CD8-positive, alpha-beta T cell (primary cell): ENCODE measurements at regions of chr16 and their contacts with region 1.

Region 1: DNA sequence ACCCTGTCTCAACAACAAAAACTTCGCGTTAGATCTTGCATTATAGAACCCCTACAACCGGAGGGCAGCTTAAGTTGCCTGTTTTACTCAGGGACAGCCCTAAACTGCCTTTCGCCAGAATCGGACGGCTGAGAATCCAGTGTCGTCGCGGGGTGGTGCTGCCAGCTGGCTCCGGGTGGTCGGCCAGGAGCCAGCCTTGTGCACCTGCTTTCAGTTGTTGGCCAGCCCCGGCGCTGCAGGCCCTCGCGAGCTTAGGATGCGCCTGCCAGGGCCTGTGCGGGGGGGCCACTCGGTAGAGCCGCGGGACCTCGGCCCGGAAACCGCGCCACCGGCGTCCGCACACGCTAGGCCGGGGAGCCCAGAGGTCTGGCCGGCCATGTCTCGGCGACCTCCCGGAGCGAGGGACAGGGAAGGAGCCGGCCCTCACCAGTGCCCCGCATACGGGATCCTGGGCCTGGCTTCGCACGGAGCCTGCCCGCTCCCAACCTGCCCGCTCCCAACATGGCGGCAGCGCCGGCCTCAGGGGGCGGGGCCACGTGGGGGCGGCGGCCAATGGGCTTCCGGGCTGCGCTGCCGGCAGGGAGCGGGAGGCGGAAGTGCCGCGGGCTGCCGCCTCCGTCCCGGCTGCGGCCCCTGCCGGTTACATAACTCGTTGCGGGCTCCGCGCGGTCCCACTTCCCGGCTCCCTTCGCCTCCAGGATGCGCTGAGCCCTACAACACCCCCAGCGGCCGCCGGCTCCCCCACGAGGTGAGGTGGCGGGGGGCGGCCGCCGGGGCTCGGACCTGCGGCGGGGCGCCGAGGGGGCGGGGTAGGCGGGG is 14.2 kb downstream of the NAA60 start:
- DNase-seq: peak; percentile 78 to 96 (median 90)
- ATAC-seq: peak; percentile 84
- H3K4me3 ChIP-seq: peak overlapping the region; percentile 71 to 72
- H3K4me3 Mint-ChIP-seq: peak overlapping the region; percentile 85
- H3K27ac ChIP-seq: peak overlapping the region; percentile 76 to 89
- H3K27ac Mint-ChIP-seq: peak overlapping the region; percentile 93
- H3K4me1 ChIP-seq: peaks cover 42% of the 10 kb centered on the region
- H3K4me1 Mint-ChIP-seq: peaks cover 52% of the 10 kb centered on the region
- H3K27me3 ChIP-seq: no peaks in the 10 kb centered on the region
- H3K27me3 Mint-ChIP-seq: no peaks in the 10 kb centered on the region
- CTCF ChIP-seq: peak; percentile 49

Region 2: DNA sequence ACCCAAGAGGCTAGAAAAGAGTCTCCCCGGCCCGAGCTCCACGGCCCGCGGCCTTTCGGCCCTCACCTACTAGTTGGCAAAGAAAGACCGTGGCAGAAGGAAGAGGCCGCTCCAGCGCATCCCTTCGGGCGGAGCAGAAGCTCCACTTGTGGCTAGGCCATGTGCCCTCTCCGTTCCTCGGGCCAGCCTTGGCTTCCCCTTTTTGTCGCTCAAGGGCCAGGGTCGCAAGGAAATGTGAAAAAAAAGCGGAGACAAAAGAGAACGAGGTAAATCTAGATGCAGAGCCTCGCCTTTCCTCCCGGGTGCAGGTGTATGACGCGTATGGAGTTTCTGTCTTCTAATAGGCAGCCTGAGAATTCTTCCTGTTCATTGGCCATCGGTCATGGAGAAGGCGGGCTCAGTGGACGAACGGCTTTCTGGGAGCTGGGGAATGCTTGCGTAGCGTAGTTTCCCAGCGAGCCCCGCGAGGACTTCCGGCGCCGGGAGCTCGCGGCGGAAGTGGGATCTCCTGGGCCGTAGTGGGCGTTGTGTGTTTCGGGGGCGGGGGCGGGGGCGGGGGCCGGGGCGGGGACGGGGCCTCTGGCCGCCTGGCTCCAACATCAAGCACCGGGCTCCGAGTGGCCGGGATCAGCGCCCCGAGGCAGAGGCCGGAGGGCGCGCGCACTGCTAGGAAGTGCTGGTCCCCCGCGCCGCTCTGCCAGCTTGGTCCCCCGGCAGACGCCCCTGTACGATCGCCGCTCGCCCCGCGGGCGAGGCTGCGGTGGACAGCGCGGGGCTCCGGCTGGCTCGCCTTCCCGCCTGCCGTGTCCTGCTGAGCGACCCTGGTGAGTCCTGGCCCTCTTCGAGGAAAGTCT is 322.9 kb before region 1 on chr16 and contains the start of gene ZNF213:
- CTCF ChIA-PET with region 1: interaction called, 8 read pairs
- POLR2A ChIA-PET with region 1: interaction called, 5 read pairs
- intact Hi-C with region 1: loop called (anchors 1 kb)
- DNase-seq: peak; percentile 84 to 99 (median 92)
- ATAC-seq: peak; percentile 99
- H3K4me3 ChIP-seq: peak within 1 kb of the TSS; percentile 89 to 93
- H3K4me3 Mint-ChIP-seq: peak within 1 kb of the TSS; percentile 95
- H3K27ac ChIP-seq: peak within 1 kb of the TSS; percentile 94 to 95
- H3K27ac Mint-ChIP-seq: peak within 1 kb of the TSS; percentile 99
- H3K4me1 ChIP-seq: peaks cover 15% of the 10 kb centered on the region
- H3K4me1 Mint-ChIP-seq: peaks cover 29% of the 10 kb centered on the region
- H3K27me3 ChIP-seq: no peaks in the 10 kb centered on the region
- H3K27me3 Mint-ChIP-seq: no peaks in the 10 kb centered on the region
- CTCF ChIP-seq: peak; percentile 5
- total RNA-seq, gene ZNF213: 1.8 to 2.2 TPM

Region 3: GRCh38 chr16:3165111-3165822 is 292.4 kb before region 1 on chr16:
- CTCF ChIA-PET with region 1: interaction called, 3 read pairs
- POLR2A ChIA-PET with region 1: no interaction called
- intact Hi-C with region 1: loop called (anchors 1 to 5 kb)
- DNase-seq: no peak
- ATAC-seq: peak; percentile 16
- H3K4me3 ChIP-seq: peak overlapping the region in 1 of 2 experiments; percentile 31
- H3K4me3 Mint-ChIP-seq: peak overlapping the region; percentile 42
- H3K27ac ChIP-seq: peak overlapping the region in 1 of 2 experiments; percentile 36
- H3K27ac Mint-ChIP-seq: peak overlapping the region; percentile 58
- H3K4me1 ChIP-seq: peaks cover 7% of the 10 kb centered on the region
- H3K4me1 Mint-ChIP-seq: peaks cover 11% of the 10 kb centered on the region
- H3K27me3 ChIP-seq: peaks cover 0 to 2% of the 10 kb centered on the region in 2 experiments
- H3K27me3 Mint-ChIP-seq: no peaks in the 10 kb centered on the region
- CTCF ChIP-seq: no peak

Region 4: GRCh38 chr16:3182608-3183444 is 274.8 kb before region 1 on chr16:
- CTCF ChIA-PET with region 1: interaction called, 5 read pairs
- POLR2A ChIA-PET with region 1: no interaction called
- intact Hi-C with region 1: loop called (anchors 2 to 5 kb)
- DNase-seq: peak in 6 of 9 experiments; percentile 38 to 74 (median 64)
- ATAC-seq: peak; percentile 64
- H3K4me3 ChIP-seq: peak overlapping the region; percentile 38 to 43
- H3K4me3 Mint-ChIP-seq: peak overlapping the region; percentile 78
- H3K27ac ChIP-seq: no peak overlapping the region
- H3K27ac Mint-ChIP-seq: peak overlapping the region; percentile 66
- H3K4me1 ChIP-seq: peaks cover 19% of the 10 kb centered on the region
- H3K4me1 Mint-ChIP-seq: peaks cover 19% of the 10 kb centered on the region
- H3K27me3 ChIP-seq: peaks cover 31 to 38% of the 10 kb centered on the region in 2 experiments
- H3K27me3 Mint-ChIP-seq: peaks cover 65% of the 10 kb centered on the region
- CTCF ChIP-seq: no peak

Region 5: DNA sequence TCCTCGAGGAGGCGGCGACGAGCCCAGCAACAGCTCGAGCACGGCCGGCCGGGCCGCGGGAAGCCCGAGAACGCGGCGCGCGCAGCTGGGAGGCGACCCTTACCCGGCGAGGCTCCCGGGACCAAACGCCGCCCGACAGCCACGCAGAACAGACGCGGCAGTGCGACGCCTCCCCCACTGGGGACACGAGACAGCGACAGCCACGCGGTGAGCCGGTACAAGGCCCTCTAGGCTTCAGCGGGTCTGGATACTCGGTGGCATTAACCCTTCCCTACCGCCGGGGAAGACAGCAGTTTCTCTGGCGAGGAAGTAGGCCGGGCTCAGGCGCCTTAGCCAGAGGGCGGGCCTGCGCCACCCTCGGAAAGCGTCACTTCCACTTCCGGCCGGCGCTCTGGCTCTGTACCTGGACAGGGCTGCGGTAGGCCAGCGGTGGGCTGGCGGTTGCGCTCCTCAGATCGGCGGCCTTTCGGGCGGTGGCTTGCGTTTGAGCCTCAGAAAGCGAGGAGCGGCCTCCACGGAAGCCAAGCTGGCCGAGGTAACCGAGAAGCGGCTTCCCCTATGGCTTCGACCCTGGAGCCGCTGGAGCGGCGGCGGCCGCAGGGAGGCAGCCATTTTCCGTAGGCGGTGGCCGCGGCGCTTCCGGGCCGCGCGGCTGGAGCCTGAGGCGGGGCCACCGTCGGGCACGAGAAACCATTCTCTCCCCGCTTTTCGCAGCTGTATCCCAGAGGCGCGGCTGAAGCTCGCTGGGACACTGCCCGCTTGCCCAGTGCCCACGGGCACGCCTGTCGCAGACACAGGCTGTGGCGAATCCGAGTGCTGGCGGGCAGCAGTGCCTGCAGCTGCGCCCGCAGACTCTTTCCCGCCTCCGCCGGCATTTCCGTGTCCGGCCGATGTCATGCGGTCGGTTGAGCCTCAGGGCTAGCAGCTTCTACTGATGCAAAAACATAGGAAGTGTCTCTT is 152.3 kb before region 1 on chr16 and contains the starts of genes TIGD7 and ZNF75A:
- CTCF ChIA-PET with region 1: no interaction called
- POLR2A ChIA-PET with region 1: interaction called, 5 read pairs
- intact Hi-C with region 1: loop called (anchors 1 kb)
- DNase-seq: peak; percentile 60 to 94 (median 83)
- ATAC-seq: peak; percentile 97
- H3K4me3 ChIP-seq: peak within 1 kb of the TSS; percentile 90 to 93
- H3K4me3 Mint-ChIP-seq: peak within 1 kb of the TSS; percentile 83
- H3K27ac ChIP-seq: peak within 1 kb of the TSS; percentile 86 to 91
- H3K27ac Mint-ChIP-seq: peak within 1 kb of the TSS; percentile 90
- H3K4me1 ChIP-seq: peaks cover 14% of the 10 kb centered on the region
- H3K4me1 Mint-ChIP-seq: peaks cover 30% of the 10 kb centered on the region
- H3K27me3 ChIP-seq: no peaks in the 10 kb centered on the region
- H3K27me3 Mint-ChIP-seq: no peaks in the 10 kb centered on the region
- CTCF ChIP-seq: no peak
- total RNA-seq, gene TIGD7: 4.1 to 4.2 TPM
- total RNA-seq, gene ZNF75A: 59.6 to 61.3 TPM

Region 6: DNA sequence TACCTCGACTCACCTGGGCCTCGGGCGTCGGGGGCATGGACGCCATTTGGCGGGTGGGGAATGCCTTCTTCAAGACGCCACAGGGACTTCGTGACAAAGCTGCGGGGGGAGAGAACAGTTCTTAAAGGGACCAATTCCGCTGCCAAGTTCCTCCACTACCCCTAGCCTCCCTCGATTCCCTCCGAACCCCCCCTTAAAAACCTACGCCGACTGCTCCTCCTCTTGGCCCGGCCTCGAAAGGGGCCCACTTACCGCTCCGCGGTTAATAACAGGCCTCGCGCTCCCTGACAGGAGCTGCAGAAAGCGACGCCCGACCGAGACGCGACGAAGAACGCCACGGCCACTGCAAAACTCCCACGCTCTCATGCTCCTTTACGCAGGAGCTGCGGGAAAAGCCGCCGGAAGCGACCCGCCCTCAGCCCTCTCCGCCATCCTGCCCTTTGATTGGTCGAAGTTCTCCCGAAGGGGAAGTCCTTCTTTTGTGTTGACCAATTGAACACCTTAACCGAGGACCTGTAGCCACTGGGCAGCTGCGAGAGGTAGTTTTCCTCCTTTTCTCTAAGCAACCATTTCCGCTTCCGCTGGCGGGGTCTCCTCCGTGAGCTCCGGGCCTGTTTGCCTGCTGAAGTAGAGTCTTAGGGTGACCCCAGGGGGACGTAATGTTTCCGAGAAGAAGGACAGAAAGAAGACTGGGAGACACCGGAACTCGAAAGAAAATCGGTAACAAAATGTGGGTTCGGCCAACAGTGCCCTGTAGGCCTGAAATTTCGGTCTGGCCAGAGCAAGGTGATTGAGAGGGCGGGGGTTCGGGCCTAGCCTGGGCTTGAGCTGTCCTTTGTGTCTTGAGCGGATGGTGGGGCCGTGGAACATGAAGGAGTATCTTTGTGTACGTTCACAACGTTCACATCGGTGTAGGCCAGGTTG is 14.3 kb before region 1 on chr16 and contains the starts of genes NAA60 and ZNF597:
- CTCF ChIA-PET with region 1: no interaction called
- POLR2A ChIA-PET with region 1: interaction called, 15 read pairs
- intact Hi-C with region 1: loop called in 1 of 2 experiments (anchors 2 kb)
- DNase-seq: peak; percentile 41 to 92 (median 78)
- ATAC-seq: peak; percentile 89
- H3K4me3 ChIP-seq: peak within 1 kb of the TSS; percentile 51 to 75
- H3K4me3 Mint-ChIP-seq: peak within 1 kb of the TSS; percentile 94
- H3K27ac ChIP-seq: peak within 1 kb of the TSS; percentile 61 to 87
- H3K27ac Mint-ChIP-seq: peak within 1 kb of the TSS; percentile 96
- H3K4me1 ChIP-seq: peaks cover 13% of the 10 kb centered on the region
- H3K4me1 Mint-ChIP-seq: peaks cover 32% of the 10 kb centered on the region
- H3K27me3 ChIP-seq: no peaks in the 10 kb centered on the region
- H3K27me3 Mint-ChIP-seq: no peaks in the 10 kb centered on the region
- CTCF ChIP-seq: no peak
- total RNA-seq, gene NAA60: 45.4 to 48.0 TPM
- total RNA-seq, gene ZNF597: 4.5 to 4.6 TPM